Gastrocnemius medialis (tissue), 4 donors: ENCODE measurements at regions of chr1 and their contacts with region 1.

Region 1: DNA sequence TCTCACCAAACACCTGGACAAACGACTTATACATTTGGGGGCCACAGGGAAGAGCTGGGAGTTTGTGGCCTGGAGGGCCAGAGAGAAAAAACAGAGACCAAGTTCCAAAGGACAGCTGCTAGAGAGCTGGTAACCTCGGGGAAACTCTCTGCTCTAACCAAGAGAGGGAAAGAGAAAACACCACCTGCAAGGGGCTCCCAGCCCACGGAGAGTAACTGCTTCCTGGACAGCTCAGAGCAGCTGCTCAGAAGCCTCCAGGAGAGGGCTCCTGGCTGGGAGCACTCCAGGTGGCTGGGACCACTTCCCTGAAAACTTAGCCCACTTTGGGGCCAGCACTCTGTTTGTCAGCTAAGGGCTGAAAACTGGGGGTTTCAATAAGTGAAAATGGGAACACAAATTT is 154.8 kb upstream of the GRIK3 start:
- DNase-seq: no peak
- ATAC-seq: no peak
- H3K4me3 ChIP-seq: no peak overlapping the region
- H3K27ac ChIP-seq: no peak overlapping the region
- H3K4me1 ChIP-seq: no peaks in the 10 kb centered on the region
- H3K27me3 ChIP-seq: peaks cover 0 to 3% (median 0%) of the 10 kb centered on the region in 3 donors
- CTCF ChIP-seq: no peak
- POLR2A ChIP-seq: no peak

Region 2: GRCh38 chr1:37233606-37234005 is 44.5 kb after region 1 on chr1:
- in situ Hi-C with region 1: no loop called
- intact Hi-C with region 1: loop called (anchors 2 kb)
- DNase-seq: no peak
- ATAC-seq: no peak
- H3K4me3 ChIP-seq: no peak overlapping the region
- H3K27ac ChIP-seq: no peak overlapping the region
- H3K4me1 ChIP-seq: no peaks in the 10 kb centered on the region
- H3K27me3 ChIP-seq: peaks cover 0 to 6% (median 2%) of the 10 kb centered on the region in 3 donors
- CTCF ChIP-seq: no peak
- POLR2A ChIP-seq: no peak